Endothelial cell of umbilical vein (primary cell): ENCODE measurements at regions of chr10 and their contacts with region 1.

Region 1: GRCh38 chr10:119103903-119104652 is at the start of gene DENND10:
- DNase-seq: peak; percentile 76
- H3K4me3 ChIP-seq: peak within 1 kb of the TSS; percentile 30 to 72 (median 40)
- H3K27ac ChIP-seq: no peak within 1 kb of the TSS
- H3K4me1 ChIP-seq: peaks cover 22% of the 10 kb centered on the region
- H3K27me3 ChIP-seq: no peaks in the 10 kb centered on the region
- CTCF ChIP-seq: no peak
- POLR2A ChIP-seq: peak; percentile 90
- total RNA-seq, gene DENND10: 50.1 and 54.3 TPM in 2 replicates

Region 2: GRCh38 chr10:118742782-118743181 is 361.3 kb before region 1 on chr10:
- CTCF ChIA-PET with region 1: no interaction called
- POLR2A ChIA-PET with region 1: no interaction called
- dilution Hi-C with region 1: no loop called
- intact Hi-C with region 1: no loop called
- DNase-seq: no peak
- H3K4me3 ChIP-seq: no peak overlapping the region
- H3K27ac ChIP-seq: no peak overlapping the region
- H3K4me1 ChIP-seq: no peaks in the 10 kb centered on the region
- H3K27me3 ChIP-seq: no peaks in the 10 kb centered on the region
- CTCF ChIP-seq: no peak
- POLR2A ChIP-seq: no peak

Region 3: GRCh38 chr10:119028900-119029612 is 75.0 kb before region 1 on chr10:
- CTCF ChIA-PET with region 1: no interaction called
- POLR2A ChIA-PET with region 1: no interaction called
- dilution Hi-C with region 1: no loop called
- intact Hi-C with region 1: loop called (anchors 1 kb)
- DNase-seq: peak; percentile 87
- H3K4me3 ChIP-seq: peak overlapping the region in 1 of 3 experiments; percentile 37
- H3K27ac ChIP-seq: no peak overlapping the region
- H3K4me1 ChIP-seq: peaks cover 8% of the 10 kb centered on the region
- H3K27me3 ChIP-seq: no peaks in the 10 kb centered on the region
- CTCF ChIP-seq: peak; percentile 4 to 38
- POLR2A ChIP-seq: no peak

Region 4: GRCh38 chr10:119149723-119150122 is 45.6 kb after region 1 on chr10:
- CTCF ChIA-PET with region 1: no interaction called
- POLR2A ChIA-PET with region 1: no interaction called
- dilution Hi-C with region 1: no loop called
- intact Hi-C with region 1: no loop called
- DNase-seq: no peak
- H3K4me3 ChIP-seq: no peak overlapping the region
- H3K27ac ChIP-seq: no peak overlapping the region
- H3K4me1 ChIP-seq: no peaks in the 10 kb centered on the region
- H3K27me3 ChIP-seq: no peaks in the 10 kb centered on the region
- CTCF ChIP-seq: no peak
- POLR2A ChIP-seq: no peak

Region 5: DNA sequence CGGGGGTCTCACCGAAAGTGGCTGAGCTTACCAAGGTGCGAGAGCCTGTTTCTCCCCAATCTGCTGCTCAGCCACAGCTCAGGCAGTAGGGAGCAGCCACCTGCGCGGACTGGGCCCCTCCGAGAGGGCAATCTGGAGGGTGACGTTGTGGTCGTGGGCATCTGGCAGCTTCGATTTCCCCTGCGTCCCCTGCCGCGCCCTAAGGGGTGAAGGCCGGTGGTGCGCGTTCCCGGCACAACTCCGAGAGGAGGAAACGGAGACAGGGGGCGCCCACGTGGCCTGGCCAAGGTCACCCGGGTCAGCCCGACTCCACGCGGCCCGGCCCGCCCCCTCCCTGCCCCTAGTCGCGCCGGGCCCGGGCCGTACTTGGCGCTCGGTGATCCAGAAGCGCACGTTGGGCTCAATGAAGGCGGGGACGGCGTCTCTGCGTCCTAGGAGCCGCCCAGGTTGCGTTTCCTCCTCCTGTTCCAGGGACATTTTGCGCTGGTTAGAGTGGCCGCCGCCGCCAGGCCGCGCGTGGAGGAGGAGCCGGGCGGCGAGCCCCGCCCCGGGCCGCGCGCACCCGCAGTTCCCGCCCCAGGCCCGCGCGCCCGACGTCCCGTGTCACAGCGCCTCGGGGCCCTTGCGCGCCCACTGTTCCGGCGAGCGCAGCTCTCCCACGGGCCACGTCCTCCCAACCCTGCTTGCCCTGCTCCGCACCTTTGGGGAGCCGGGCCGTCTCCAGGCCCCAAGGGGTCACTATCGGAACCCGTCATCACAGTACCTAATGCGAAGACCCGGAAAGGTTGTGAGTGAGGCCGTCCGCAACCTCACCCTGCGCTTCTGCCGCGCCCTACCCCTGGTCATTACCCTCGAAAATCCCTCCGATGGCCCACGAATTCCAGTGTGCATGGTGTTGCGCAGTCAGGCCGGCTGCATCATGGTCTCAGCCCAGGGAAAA is 61.4 kb after region 1 on chr10 and contains the start of gene SFXN4:
- CTCF ChIA-PET with region 1: no interaction called
- POLR2A ChIA-PET with region 1: no interaction called
- dilution Hi-C with region 1: no loop called
- intact Hi-C with region 1: loop called (anchors 5 kb)
- DNase-seq: peak; percentile 68
- H3K4me3 ChIP-seq: peak within 1 kb of the TSS; percentile 48 to 70 (median 62)
- H3K27ac ChIP-seq: peak within 1 kb of the TSS; percentile 54
- H3K4me1 ChIP-seq: peaks cover 24% of the 10 kb centered on the region
- H3K27me3 ChIP-seq: no peaks in the 10 kb centered on the region
- CTCF ChIP-seq: no peak
- POLR2A ChIP-seq: peak; percentile 81
- total RNA-seq, gene SFXN4: 14.5 and 17.1 TPM in 2 replicates

Region 6: GRCh38 chr10:119290291-119291048 is 186.4 kb after region 1 on chr10:
- CTCF ChIA-PET with region 1: no interaction called
- POLR2A ChIA-PET with region 1: no interaction called
- dilution Hi-C with region 1: no loop called
- intact Hi-C with region 1: no loop called
- DNase-seq: no peak
- H3K4me3 ChIP-seq: no peak overlapping the region
- H3K27ac ChIP-seq: no peak overlapping the region
- H3K4me1 ChIP-seq: peaks cover 2% of the 10 kb centered on the region
- H3K27me3 ChIP-seq: no peaks in the 10 kb centered on the region
- CTCF ChIP-seq: no peak
- POLR2A ChIP-seq: no peak

Region 7: DNA sequence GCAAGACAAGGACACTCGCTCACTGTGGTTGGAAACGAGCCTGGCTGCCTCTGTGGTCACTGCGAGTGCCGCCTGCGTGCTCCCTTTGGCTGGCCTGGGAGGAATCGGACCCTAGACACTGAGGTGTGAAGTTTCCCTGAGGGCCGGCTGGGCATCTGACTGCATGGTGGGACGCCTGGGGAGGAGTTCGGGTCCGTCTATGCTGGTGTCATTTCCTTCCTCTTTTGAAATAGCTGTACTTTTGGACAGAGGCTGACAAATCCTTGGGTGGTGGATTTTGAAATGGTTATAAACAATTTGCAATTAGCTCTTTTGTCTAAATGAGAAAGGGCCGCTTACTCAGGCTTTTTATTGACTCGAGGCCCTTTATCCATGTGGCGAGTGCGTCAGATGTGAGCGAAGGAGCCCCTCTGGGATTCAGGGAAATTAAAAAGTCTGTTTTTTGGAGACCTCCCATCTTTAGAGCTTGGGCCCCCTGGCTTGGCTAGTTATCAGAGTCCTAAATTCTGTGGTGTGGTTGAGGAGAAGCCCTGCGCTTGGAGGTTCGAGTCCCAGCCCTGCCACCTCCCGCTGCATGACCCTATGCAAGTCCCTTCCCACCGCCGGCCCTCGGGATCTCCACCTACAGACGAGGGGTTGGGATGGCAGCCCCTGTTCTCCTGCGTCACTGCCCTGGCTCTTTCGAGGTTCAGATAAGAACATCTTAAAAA is 291.4 kb after region 1 on chr10:
- CTCF ChIA-PET with region 1: no interaction called
- POLR2A ChIA-PET with region 1: no interaction called
- dilution Hi-C with region 1: no loop called
- intact Hi-C with region 1: no loop called
- DNase-seq: peak; percentile 35
- H3K4me3 ChIP-seq: no peak overlapping the region
- H3K27ac ChIP-seq: no peak overlapping the region
- H3K4me1 ChIP-seq: peaks cover 8% of the 10 kb centered on the region
- H3K27me3 ChIP-seq: no peaks in the 10 kb centered on the region
- CTCF ChIP-seq: no peak
- POLR2A ChIP-seq: no peak